HCT116 (cell line): ENCODE measurements at regions of chr3 and their contacts with region 1.

Region 1: DNA sequence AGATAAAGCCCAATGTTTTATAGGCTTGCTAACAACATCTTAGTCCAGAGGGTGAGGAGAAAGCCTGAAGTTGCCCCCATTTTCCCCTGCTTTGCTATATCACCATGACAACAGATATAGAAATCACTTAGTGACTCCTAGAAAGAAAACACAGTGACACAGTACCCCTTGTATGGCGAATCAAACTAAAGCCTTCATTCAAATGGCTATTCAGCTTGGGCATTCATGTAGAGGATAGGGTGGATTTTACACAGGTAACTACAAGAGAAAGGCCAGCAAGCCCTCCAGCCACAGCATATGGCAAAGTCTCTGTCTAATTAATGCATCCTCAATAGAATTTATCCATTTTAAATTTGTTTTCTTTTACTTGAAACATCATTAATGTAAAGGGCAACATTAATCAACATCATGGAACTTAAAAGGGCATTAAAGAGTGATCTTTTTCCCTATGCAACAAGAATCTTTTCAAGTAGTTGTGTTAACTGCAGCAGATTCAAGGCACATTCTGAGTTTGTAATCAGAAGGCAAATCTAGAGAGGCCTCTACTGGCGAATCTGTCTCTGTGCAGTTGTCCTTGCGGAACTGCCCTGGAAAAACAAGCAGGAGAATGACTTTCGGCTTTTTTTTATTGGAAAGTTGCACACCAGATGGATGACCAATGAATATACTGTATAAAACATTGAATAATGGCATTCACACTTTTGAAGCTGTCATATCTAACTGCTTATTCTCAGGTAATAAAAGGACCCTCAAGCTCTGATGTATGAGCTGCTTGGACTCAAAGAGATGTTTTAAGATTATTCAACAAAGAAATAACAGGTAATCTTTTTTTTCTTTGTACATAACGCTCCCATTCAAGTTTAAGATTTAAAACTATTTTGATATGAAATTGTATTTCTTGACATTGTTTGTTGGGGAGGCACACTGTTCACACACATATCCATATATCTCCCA is 621.7 kb upstream of the AGTR1 start:
- DNase-seq: peak; percentile 38
- ATAC-seq: peak; percentile 90
- H3K4me3 ChIP-seq: no peak overlapping the region
- H3K27ac ChIP-seq: no peak overlapping the region
- H3K4me1 ChIP-seq: no peaks in the 10 kb centered on the region
- H3K27me3 ChIP-seq: no peaks in the 10 kb centered on the region
- CTCF ChIP-seq: peak; percentile 63 to 81 (median 73); a peak in 5 of 6 replicates
- POLR2A ChIP-seq: no peak
- RAD21 ChIP-seq: peak; percentile 81

Region 2: GRCh38 chr3:147119989-147120388 is 956.1 kb before region 1 on chr3:
- CTCF ChIA-PET with region 1: interaction called, 7 read pairs
- POLR2A ChIA-PET with region 1: no interaction called
- RAD21 ChIA-PET with region 1: no interaction called
- intact Hi-C with region 1: loop called (anchors 10 kb)
- DNase-seq: no peak
- ATAC-seq: no peak
- H3K4me3 ChIP-seq: no peak overlapping the region
- H3K27ac ChIP-seq: no peak overlapping the region
- H3K4me1 ChIP-seq: no peaks in the 10 kb centered on the region
- H3K27me3 ChIP-seq: no peaks in the 10 kb centered on the region
- CTCF ChIP-seq: peak; percentile 39 to 53 (median 45); a peak in 5 of 6 replicates
- POLR2A ChIP-seq: no peak
- RAD21 ChIP-seq: peak; percentile 62

Region 3: GRCh38 chr3:147361454-147362420 is 714.3 kb before region 1 on chr3:
- CTCF ChIA-PET with region 1: interaction called, 3 read pairs
- POLR2A ChIA-PET with region 1: no interaction called
- RAD21 ChIA-PET with region 1: no interaction called
- intact Hi-C with region 1: loop called (anchors 5 kb)
- DNase-seq: peak; percentile 34
- ATAC-seq: peak; percentile 95
- H3K4me3 ChIP-seq: no peak overlapping the region
- H3K27ac ChIP-seq: no peak overlapping the region
- H3K4me1 ChIP-seq: no peaks in the 10 kb centered on the region
- H3K27me3 ChIP-seq: no peaks in the 10 kb centered on the region
- CTCF ChIP-seq: peak; percentile 53 to 95 (median 84); a peak in 5 of 6 replicates
- POLR2A ChIP-seq: no peak
- RAD21 ChIP-seq: peak; percentile 57

Region 4: DNA sequence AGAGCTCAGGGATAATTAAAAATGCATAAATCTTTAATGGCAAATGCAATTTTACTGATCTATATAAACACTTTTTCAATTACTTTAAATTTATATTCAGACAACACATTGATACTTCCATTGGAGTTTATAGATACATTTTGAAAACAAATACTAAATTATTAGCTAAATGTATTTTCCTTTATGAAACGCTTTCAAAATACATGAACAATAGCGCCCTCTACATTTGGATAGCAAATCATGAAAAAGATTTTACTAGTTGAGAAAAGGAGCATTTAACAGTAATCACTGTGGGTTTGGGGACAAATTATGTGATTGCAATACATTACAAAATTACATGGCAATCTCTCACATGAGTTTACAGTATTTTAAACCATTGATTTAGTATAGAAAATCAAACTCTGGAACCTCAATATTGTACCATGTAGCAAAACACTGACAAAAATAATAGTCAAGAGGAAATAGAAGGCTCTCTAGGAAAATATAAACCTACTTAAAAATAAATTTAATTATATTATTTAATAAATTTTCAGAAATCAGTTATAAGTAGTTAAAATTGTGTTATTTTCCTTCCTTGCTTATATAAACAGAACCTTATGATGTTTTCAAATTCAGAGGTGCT is 458.9 kb before region 1 on chr3:
- CTCF ChIA-PET with region 1: interaction called, 5 read pairs
- POLR2A ChIA-PET with region 1: no interaction called
- RAD21 ChIA-PET with region 1: no interaction called
- intact Hi-C with region 1: loop called (anchors 1 kb)
- DNase-seq: peak; percentile 12
- ATAC-seq: no peak
- H3K4me3 ChIP-seq: no peak overlapping the region
- H3K27ac ChIP-seq: no peak overlapping the region
- H3K4me1 ChIP-seq: no peaks in the 10 kb centered on the region
- H3K27me3 ChIP-seq: no peaks in the 10 kb centered on the region
- CTCF ChIP-seq: peak; percentile 44 to 76 (median 44); a peak in 5 of 6 replicates
- POLR2A ChIP-seq: no peak
- RAD21 ChIP-seq: peak; percentile 56

Region 5: GRCh38 chr3:147903037-147903436 is 173.0 kb before region 1 on chr3:
- CTCF ChIA-PET with region 1: no interaction called
- POLR2A ChIA-PET with region 1: no interaction called
- RAD21 ChIA-PET with region 1: no interaction called
- intact Hi-C with region 1: no loop called
- DNase-seq: no peak
- ATAC-seq: no peak
- H3K4me3 ChIP-seq: no peak overlapping the region
- H3K27ac ChIP-seq: no peak overlapping the region
- H3K4me1 ChIP-seq: peaks cover under 1 to 2% of the 10 kb centered on the region in 2 experiments; a peak in 1 of 4 replicates
- H3K27me3 ChIP-seq: no peaks in the 10 kb centered on the region
- CTCF ChIP-seq: no peak
- POLR2A ChIP-seq: no peak
- RAD21 ChIP-seq: no peak